Tibial artery (tissue), 4 donors: ENCODE measurements at regions of chr1 and their contacts with region 1.

Region 1: DNA sequence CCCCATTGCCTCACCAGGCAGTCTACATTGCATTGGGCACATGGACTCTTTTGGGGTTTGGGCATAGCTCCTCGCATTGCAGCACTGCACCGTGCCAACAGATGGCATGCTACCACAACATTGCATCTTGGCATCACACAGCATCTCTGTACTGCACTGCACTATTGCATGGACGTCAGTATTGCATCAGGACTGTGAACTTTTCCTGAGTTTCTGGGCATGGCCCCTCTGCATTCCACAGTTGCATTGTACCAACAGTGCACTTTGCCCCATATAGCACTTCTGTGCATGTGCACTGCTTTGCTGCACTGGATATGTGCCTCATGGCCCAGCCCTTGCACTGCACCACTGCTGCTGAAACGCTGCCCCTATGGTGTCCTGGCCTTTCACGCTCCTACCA is 9.6 kb downstream of the PTPRU start:
- DNase-seq: peak in 1 of 2 donors; percentile 48
- H3K4me3 ChIP-seq: no peak overlapping the region
- H3K27ac ChIP-seq: no peak overlapping the region
- H3K4me1 ChIP-seq: peaks cover 0 to 2% (median 0%) of the 10 kb centered on the region in 4 donors
- H3K27me3 ChIP-seq: no peaks in the 10 kb centered on the region
- CTCF ChIP-seq: no peak

Region 2: DNA sequence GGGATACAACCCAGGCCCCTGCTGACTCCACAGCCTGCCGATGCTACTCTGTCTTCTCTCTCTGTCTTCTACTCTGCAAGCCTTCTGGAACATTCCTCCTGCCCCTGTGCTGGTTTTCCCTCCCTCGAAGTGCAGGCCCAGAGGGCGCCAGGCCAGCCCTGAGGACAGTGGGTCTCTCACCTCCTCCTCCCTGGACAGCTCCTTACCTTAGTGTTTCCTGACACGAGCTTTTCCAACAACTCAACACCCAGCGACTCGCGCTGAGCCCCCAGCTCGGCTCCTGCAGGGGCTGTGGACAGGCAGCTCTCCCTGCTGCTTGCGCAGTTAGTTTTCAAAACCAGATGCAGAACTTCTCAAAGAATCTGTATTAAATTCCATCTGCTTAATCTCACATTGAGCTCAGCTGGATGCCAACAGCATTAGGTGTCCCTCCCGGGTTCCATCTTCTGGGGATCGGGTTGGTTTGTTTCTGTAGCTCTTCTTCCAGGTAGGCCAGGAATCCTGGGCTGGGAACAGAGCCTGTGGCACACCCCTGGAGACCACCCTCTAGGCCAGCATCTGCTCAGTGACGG is 44.6 kb after region 1 on chr1:
- intact Hi-C with region 1: no loop called
- DNase-seq: no peak
- H3K4me3 ChIP-seq: no peak overlapping the region
- H3K27ac ChIP-seq: no peak overlapping the region
- H3K4me1 ChIP-seq: no peaks in the 10 kb centered on the region
- H3K27me3 ChIP-seq: no peaks in the 10 kb centered on the region
- CTCF ChIP-seq: no peak

Region 3: GRCh38 chr1:29579821-29580425 is 334.0 kb after region 1 on chr1:
- intact Hi-C with region 1: no loop called
- DNase-seq: no peak
- H3K4me3 ChIP-seq: no peak overlapping the region
- H3K27ac ChIP-seq: no peak overlapping the region
- H3K4me1 ChIP-seq: no peaks in the 10 kb centered on the region
- H3K27me3 ChIP-seq: peaks cover 0 to 42% of the 10 kb centered on the region in 2 donors
- CTCF ChIP-seq: no peak

Region 4: DNA sequence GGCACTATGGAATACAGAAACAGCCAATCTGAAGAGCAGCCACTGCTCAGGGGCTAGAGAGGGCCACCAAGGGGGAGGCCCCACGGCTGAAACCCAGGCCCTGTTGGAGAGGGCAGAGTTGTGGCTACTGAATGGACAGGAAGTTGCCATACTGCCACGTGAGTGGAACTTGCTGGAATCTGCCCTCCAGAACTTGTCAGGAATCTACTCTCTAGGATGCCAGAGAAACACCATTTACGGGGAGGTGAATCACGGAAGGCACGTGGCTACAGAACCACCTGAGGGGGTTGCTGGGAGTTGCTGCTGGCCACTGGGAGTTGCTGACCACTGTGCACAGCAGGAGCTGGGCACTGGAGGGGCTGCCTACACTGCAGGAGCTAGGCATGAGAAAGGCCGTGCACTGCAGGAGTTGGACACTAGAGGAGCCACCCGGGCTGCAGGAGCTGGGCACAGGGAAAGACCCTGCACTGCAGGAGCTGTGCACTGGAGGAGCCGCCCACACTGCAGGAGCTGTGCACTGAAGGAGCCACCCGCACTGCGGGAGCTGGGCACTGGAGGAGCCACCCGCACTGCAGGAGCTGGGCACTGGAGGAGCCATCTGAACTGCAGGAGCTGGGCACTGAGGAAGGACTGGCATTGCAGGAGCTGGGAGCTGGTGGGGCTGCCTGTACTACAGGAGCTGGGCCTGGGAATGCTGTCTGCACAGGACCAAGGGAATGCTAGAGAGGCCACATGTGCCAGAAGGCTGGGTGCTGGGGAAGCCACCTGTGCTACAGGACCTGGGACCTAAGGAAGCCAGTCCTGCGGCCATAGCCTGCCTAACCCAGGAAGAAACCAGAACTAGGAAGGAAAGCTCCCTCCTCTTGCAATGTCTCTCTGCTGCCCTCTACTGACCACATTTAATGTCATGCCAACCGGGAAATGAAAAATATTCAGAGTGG is 1134.1 kb after region 1 on chr1:
- intact Hi-C with region 1: loop called (anchors 5 kb)
- DNase-seq: peak; percentile 46 to 63
- H3K4me3 ChIP-seq: no peak overlapping the region
- H3K27ac ChIP-seq: no peak overlapping the region
- H3K4me1 ChIP-seq: peaks cover 0 to 8% (median 2%) of the 10 kb centered on the region in 4 donors
- H3K27me3 ChIP-seq: peaks cover 0 to 54% of the 10 kb centered on the region in 2 donors
- CTCF ChIP-seq: peak; percentile 73 to 87